ENCODE measurements at regions of chr11 and their contacts with region 1.

Region 1: GRCh38 chr11:46121724-46122477 is 647 bp upstream of the PHF21A start:
- DNase-seq: peak; percentile 100
- H3K4me3 ChIP-seq: peak overlapping the region; percentile 75
- H3K27ac ChIP-seq: peak overlapping the region; percentile 68
- H3K4me1 ChIP-seq: peaks cover 29% of the 10 kb centered on the region
- H3K27me3 ChIP-seq: no peaks in the 10 kb centered on the region
- CTCF ChIP-seq: no peak

Region 2: GRCh38 chr11:45846974-45847910 is 274.7 kb before region 1 on chr11 and contains the start of gene CRY2:
- CTCF ChIA-PET with region 1: no interaction called
- POLR2A ChIA-PET with region 1: no interaction called
- intact Hi-C with region 1: loop called (anchors 10 kb)
- DNase-seq: peak; percentile 100
- H3K4me3 ChIP-seq: peak within 1 kb of the TSS; percentile 74
- H3K27ac ChIP-seq: peak within 1 kb of the TSS; percentile 87
- H3K4me1 ChIP-seq: peaks cover 25% of the 10 kb centered on the region
- H3K27me3 ChIP-seq: peaks cover 12% of the 10 kb centered on the region
- CTCF ChIP-seq: no peak
- total RNA-seq, gene CRY2: 46.4 and 47.0 TPM in 2 replicates

Region 3: DNA sequence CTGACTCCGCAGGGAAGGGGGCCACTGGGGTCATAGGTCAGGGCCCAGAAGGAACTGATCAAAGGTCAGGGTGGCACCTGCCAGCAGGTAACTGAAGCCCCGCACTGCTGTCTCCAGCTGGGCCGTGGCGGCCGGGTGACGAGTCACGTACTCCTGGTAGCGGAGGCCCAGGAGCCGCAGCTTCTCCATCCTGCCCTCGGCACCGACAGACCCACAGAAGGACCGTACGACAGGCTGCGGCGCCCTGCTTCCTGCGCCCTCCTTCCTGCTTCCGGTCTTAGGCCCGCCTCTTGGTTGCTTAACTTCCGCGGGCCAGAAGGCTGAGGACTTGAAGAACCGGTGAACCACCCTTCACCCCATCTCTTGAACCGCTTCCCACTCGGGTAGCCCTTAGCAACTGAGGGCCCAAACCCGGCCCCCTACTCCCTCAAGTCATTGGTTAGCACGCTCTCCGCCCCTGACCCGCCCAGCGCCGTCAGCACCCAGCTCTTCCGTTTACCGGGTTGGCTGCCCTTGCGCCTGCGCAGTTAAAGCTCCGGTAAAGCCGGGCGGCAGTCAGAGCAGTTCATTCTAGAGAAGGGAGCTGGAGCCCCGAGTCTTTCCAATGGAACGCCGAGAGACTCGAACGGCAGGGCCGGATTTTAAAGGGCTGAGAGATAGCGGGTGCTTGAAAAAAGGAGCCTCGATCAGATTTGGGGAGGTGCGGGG is 204.1 kb before region 1 on chr11 and contains the start of gene PEX16:
- CTCF ChIA-PET with region 1: no interaction called
- POLR2A ChIA-PET with region 1: no interaction called
- intact Hi-C with region 1: loop called (anchors 5 kb)
- DNase-seq: peak; percentile 100
- H3K4me3 ChIP-seq: peak within 1 kb of the TSS; percentile 71
- H3K27ac ChIP-seq: peak within 1 kb of the TSS; percentile 87
- H3K4me1 ChIP-seq: peaks cover 9% of the 10 kb centered on the region
- H3K27me3 ChIP-seq: no peaks in the 10 kb centered on the region
- CTCF ChIP-seq: no peak
- total RNA-seq, gene PEX16: 64.1 and 68.9 TPM in 2 replicates

Region 4: GRCh38 chr11:45982656-45983470 is 139.0 kb before region 1 on chr11:
- CTCF ChIA-PET with region 1: no interaction called
- POLR2A ChIA-PET with region 1: interaction called, 11 read pairs
- intact Hi-C with region 1: no loop called
- DNase-seq: peak; percentile 96
- H3K4me3 ChIP-seq: peak overlapping the region; percentile 11
- H3K27ac ChIP-seq: peak overlapping the region; percentile 83
- H3K4me1 ChIP-seq: peaks cover 46% of the 10 kb centered on the region
- H3K27me3 ChIP-seq: no peaks in the 10 kb centered on the region
- CTCF ChIP-seq: no peak

Region 5: DNA sequence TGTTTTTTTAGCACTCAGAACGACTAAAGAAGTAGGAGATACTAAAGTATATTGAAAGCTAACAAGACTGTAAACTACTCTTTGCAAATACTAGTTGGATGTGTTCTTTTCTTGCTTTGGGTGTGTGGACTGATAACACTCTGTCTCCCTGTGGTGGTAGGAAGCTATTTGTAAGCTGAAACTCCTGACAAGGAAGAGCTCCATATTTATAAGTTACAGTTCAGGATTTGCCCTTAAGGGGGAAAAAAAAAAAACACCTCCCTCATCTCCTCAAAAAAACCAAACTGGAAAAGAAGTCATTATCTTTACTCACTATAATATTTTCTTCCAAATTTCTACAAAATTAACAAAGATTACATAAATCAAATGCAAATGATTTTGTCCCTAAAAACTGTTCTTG is 104.6 kb before region 1 on chr11:
- CTCF ChIA-PET with region 1: no interaction called
- POLR2A ChIA-PET with region 1: interaction called, 16 read pairs
- intact Hi-C with region 1: no loop called
- DNase-seq: no peak
- H3K4me3 ChIP-seq: no peak overlapping the region
- H3K27ac ChIP-seq: no peak overlapping the region
- H3K4me1 ChIP-seq: no peaks in the 10 kb centered on the region
- H3K27me3 ChIP-seq: no peaks in the 10 kb centered on the region
- CTCF ChIP-seq: no peak

Region 6: DNA sequence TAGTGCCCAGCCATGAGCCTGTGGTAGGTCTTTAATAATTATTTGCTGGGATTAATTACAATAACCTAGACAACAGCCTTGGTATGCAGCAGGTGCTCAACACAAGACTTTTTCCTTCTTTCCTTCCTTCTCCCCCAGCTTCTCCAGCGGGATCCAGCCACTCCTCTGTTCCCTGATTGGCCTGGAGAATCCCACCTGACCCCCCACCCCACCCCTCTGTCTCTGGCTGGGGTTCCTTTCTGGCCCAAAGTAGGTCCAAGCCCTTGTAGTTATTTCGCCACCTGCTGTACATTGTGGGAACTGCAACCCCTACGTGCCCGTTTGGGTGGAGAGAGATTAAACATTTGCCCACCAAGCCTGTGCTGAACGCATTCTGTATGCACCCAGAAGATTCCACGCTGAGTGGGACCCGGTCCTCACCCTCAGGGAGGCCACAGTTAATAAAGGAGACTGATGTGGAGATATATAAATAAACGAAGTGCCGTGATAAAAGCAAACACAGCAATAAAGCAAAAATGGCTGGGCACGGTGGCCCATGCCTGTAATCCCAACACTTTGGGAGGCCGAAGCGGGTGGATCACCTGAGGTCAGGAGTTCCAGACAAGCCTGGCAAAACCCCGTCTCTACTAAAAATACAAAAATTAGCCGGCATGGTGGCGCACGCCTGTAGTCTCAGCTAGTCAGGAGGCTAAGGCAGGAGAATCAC is 193.3 kb after region 1 on chr11:
- CTCF ChIA-PET with region 1: interaction called, 4 read pairs
- POLR2A ChIA-PET with region 1: no interaction called
- intact Hi-C with region 1: loop called (anchors 5 kb)
- DNase-seq: peak; percentile 99
- H3K4me3 ChIP-seq: no peak overlapping the region
- H3K27ac ChIP-seq: no peak overlapping the region
- H3K4me1 ChIP-seq: no peaks in the 10 kb centered on the region
- H3K27me3 ChIP-seq: no peaks in the 10 kb centered on the region
- CTCF ChIP-seq: peak; percentile 100

Measured in A673 (cell line).